AG04449 (cell line): ENCODE measurements at regions of chr14 and their contacts with region 1.

Region 1: GRCh38 chr14:23114669-23115491 is 4.2 kb downstream of the CEBPE start:
- DNase-seq: peak; percentile 97
- H3K4me3 ChIP-seq: 0 out of 2 replicates have a peak overlapping the region, but pooled peaks have one; percentile 20
- CTCF ChIP-seq: peak; percentile 7

Region 2: DNA sequence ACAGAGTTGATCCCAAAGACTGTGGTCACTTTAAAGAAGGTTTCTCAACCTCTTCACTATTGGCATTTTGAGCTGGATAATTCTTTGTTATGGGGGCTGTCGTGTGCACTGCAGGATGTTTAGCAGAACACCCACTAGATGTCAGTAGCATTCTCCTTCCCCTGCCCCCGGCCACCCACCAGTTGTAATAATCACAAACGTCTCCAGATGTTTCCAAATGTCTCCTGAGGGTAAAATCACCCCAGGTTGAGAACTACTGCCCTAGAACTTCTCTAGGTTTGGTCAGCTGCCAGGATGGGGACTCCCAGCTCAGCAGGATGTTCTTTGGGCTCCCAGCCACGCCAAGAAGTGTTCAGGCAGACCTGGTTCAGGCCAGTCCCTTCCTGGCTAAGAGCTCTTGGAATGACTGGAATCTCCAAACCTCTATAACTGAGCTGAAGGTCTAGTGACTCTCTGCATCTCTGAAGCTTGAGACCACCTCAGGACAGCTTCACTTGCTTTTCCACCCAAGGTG is 120.1 kb before region 1 on chr14:
- CTCF ChIA-PET with region 1: interaction called, 32 read pairs
- POLR2A ChIA-PET with region 1: no interaction called
- DNase-seq: no peak
- H3K4me3 ChIP-seq: no peak overlapping the region
- CTCF ChIP-seq: peak; percentile 65

Region 3: GRCh38 chr14:23085458-23085857 is 29.4 kb before region 1 on chr14:
- CTCF ChIA-PET with region 1: interaction called, 214 read pairs
- POLR2A ChIA-PET with region 1: no interaction called
- DNase-seq: no peak
- H3K4me3 ChIP-seq: no peak overlapping the region
- CTCF ChIP-seq: no peak

Region 4: GRCh38 chr14:23095196-23096108 is 19.4 kb before region 1 on chr14 and contains the start of gene C14orf119:
- CTCF ChIA-PET with region 1: interaction called, 133 read pairs
- POLR2A ChIA-PET with region 1: interaction called, 6 read pairs
- DNase-seq: peak; percentile 95
- H3K4me3 ChIP-seq: peak within 1 kb of the TSS; percentile 100
- CTCF ChIP-seq: no peak